Right lobe of liver (tissue), 6 donors: ENCODE measurements at regions of chr17 and their contacts with region 1.

Region 1: DNA sequence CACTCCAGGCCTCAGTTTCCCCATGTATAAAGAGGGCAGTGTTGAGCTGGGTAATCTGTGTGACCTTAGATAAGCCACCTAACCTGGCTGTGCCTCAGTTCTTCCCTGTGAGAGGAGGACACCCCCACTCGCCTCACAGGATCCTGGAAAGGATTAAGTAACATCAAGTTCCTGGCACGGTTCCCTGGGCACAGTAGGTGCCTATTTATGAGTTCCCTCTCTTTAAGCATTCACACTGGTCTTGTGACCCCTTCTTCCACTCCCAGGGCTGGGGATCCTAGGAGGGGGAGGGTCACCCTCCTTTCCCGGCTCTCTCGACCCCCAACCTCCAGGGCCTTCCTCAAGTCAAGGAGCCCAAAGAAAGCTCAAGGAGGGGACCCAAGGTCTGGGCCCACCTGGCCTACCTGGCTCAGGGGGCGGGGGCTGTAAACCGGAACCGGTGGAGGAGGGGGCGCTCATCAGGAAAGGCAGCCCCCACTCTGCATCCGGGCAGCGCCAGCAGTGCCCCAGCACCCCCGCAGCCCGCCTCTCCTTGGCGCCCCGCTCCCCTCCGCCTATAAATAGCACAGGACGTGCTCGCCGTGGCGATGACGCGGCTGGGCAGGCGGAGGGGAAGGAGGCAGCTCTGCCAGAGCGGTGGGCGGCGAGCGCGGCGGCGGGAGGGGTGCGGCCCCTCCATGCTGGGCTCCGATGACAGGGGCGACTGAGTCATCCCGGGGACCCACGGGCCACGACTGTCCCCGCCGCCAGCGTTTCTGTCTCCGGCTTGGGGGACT is 9.4 kb downstream of the RPL19 start:
- DNase-seq: peak in 1 of 3 donors; percentile 62
- ATAC-seq: peak; percentile 8 to 53 (median 22)
- H3K4me3 ChIP-seq: peak overlapping the region in 1 of 3 donors; percentile 14
- H3K27ac ChIP-seq: no peak overlapping the region
- H3K4me1 ChIP-seq: peaks cover 0 to 6% (median 0%) of the 10 kb centered on the region in 4 donors
- H3K27me3 ChIP-seq: no peaks in the 10 kb centered on the region
- CTCF ChIP-seq: no peak
- POLR2A ChIP-seq: no peak

Region 2: DNA sequence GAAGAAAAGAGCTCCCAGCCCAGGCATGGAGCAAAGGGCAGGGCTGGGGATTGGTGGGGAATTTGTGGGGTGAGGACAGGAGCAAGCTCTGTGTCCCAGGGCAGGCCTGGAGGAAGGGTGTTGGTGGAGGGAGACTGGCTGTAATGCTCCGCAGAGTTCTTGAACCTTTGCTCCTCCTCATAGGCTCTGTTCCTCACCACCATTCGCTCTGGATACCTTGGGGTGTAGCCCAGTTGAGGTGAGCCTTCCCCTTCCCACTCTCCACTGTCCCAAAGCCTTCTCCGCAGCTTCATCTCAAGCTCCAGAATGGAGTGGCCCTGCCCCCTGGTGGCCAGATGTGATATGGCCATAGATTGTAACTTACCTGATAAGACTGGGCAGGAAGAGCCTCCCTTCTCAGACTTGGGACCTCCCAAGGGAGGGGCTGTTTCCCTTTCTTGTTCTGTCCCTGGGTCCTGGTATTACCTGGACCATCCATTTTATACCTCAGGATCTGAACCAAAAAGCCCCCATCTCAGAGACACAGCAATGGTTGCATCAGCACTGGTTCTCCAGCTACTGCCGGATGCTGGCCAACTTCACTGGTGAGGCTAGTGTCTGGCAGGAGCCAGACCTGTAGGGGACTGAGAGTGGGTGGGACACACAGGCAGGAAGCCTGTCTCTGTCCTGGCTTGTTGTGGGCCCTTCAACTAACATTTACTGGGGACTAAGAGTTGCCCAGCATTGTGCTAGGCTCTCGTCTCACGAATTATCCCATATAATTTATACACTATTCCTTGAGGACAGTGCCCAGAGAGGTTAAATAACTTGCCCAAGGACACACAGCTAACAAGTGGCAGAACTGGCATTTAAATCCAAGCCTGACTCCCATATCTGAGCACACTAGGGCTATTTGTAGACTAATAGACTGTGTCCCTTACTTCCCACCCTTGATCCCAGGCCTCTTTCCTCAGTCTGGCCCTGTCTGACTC is 35.4 kb after region 1 on chr17:
- intact Hi-C with region 1: loop called in 1 of 2 experiments (anchors 5 kb)
- DNase-seq: peak; percentile 80 to 81 (median 80)
- ATAC-seq: peak; percentile 85 to 96 (median 90)
- H3K4me3 ChIP-seq: no peak overlapping the region
- H3K27ac ChIP-seq: no peak overlapping the region
- H3K4me1 ChIP-seq: no peaks in the 10 kb centered on the region
- H3K27me3 ChIP-seq: no peaks in the 10 kb centered on the region
- CTCF ChIP-seq: peak; percentile 88 to 98 (median 96)
- POLR2A ChIP-seq: no peak

Region 3: DNA sequence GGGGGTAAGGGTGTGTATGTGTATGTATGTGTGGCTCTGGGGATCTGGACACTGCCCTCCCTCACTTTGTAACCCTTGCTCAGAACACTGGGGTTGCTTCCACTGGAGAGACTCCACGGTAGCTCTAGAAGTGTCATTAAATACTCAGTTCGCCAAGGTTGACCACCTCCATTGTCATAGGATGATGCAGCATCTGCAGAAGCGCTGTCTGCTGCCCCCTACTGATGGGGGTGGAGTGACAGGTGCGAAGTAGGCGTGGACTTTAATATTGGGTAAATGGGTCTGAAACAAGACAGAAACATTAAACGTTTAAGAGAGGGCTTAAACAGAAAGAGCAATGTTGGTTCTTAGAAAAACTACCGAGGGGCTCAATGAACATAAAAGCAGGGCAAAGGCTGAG is 51.8 kb after region 1 on chr17:
- intact Hi-C with region 1: no loop called
- DNase-seq: no peak
- ATAC-seq: no peak
- H3K4me3 ChIP-seq: no peak overlapping the region
- H3K27ac ChIP-seq: no peak overlapping the region
- H3K4me1 ChIP-seq: peaks cover 0 to 12% (median 5%) of the 10 kb centered on the region in 4 donors
- H3K27me3 ChIP-seq: no peaks in the 10 kb centered on the region
- CTCF ChIP-seq: peak in 2 of 4 donors; percentile 15 to 23
- POLR2A ChIP-seq: no peak

Region 4: DNA sequence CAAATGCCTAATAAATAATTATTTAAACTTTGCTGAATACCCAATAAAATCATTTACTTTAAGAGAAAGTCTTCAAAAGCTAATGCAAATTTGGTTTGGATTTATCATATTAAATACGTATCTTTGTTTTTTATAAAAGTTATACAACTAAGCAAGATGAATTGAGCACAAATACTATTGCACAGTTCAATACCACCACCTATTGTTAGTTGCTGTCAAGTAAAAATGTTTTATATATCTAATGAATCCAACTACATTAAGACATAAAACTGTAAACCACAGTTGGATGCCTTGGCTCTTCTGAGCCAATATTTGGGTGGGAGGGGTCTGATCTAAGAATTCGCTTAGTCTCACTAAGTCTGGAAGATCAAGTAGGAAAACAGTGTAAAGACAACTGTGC is 184.2 kb after region 1 on chr17:
- intact Hi-C with region 1: no loop called
- DNase-seq: no peak
- ATAC-seq: no peak
- H3K4me3 ChIP-seq: no peak overlapping the region
- H3K27ac ChIP-seq: no peak overlapping the region
- H3K4me1 ChIP-seq: no peaks in the 10 kb centered on the region
- H3K27me3 ChIP-seq: no peaks in the 10 kb centered on the region
- CTCF ChIP-seq: peak; percentile 11 to 14 (median 13)
- POLR2A ChIP-seq: no peak